Endothelial cell of umbilical vein (primary cell): ENCODE measurements at regions of chr17 and their contacts with region 1.

Region 1: DNA sequence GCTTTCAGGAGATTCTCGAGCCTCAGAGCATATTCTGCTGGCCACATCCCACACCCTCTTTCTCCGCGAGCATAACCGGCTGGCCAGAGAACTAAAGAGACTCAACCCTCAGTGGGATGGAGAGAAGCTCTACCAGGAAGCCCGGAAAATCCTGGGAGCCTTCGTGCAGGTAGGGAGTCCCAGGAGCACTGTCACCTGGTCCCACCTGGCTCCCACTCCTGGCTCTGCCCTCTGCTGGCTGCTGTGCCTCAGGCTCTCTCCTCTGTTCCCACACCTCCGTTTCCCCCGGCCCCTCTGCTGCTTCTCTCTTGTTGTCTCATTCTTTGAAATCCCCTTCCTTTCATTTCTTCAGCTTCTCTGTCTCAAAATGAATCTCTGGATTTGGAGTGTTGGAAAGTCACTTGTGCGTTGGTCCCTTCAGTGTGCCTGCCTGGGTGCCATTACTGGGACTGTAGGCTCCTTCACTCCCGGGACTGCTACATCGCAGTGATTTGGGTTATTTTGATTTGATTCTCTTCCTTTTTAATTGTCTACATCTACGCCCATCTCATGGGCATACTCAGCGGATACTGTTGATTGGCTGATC is 16.5 kb downstream of the LPO start:
- DNase-seq: no peak
- H3K4me3 ChIP-seq: no peak overlapping the region
- H3K27ac ChIP-seq: no peak overlapping the region
- H3K4me1 ChIP-seq: no peaks in the 10 kb centered on the region
- H3K27me3 ChIP-seq: peaks cover 11 to 15% of the 10 kb centered on the region in 2 experiments
- CTCF ChIP-seq: no peak
- POLR2A ChIP-seq: no peak

Region 2: GRCh38 chr17:58232707-58233156 is 22.2 kb before region 1 on chr17:
- CTCF ChIA-PET with region 1: interaction called, 30 read pairs
- POLR2A ChIA-PET with region 1: interaction called, 14 read pairs
- dilution Hi-C with region 1: no loop called
- intact Hi-C with region 1: no loop called
- DNase-seq: no peak
- H3K4me3 ChIP-seq: no peak overlapping the region
- H3K27ac ChIP-seq: no peak overlapping the region
- H3K4me1 ChIP-seq: no peaks in the 10 kb centered on the region
- H3K27me3 ChIP-seq: peaks cover 8 to 22% of the 10 kb centered on the region in 2 experiments
- CTCF ChIP-seq: no peak
- POLR2A ChIP-seq: no peak